ENCODE measurements at regions of chr19 and their contacts with region 1.

Region 1: GRCh38 chr19:48872182-48872883 is at the start of gene PPP1R15A:
- DNase-seq: peak; percentile 95
- ATAC-seq: peak; percentile 50
- H3K4me3 ChIP-seq: peak within 1 kb of the TSS; percentile 93 to 97 (median 94)
- H3K27ac ChIP-seq: peak within 1 kb of the TSS; percentile 99
- H3K4me1 ChIP-seq: peaks cover 50% of the 10 kb centered on the region
- H3K27me3 ChIP-seq: no peaks in the 10 kb centered on the region; a peak in 1 of 5 replicates
- CTCF ChIP-seq: 0 out of 2 replicates have a peak, but pooled peaks have one; percentile 3
- EP300 ChIP-seq: no peak; a peak in 1 of 4 replicates
- POLR2A ChIP-seq: peak; percentile 99
- RAD21 ChIP-seq: no peak
- total RNA-seq, gene PPP1R15A: 7.8 and 18.5 TPM in 2 replicates

Region 2: DNA sequence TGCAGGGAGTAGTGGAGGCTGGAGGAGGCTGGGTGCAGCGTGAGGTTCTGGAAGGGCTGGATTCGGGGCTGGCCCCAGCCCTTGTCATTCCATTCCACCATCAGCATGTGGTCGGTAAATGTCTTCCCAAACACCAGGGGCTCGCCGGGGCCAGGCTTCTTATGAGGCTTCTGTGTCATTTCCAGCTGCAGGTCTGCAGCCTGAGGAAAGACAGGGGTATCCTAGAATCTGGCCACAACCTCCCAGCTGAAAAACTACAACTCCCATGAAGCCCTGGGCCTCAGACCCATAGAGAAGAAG is 65.9 kb before region 1 on chr19:
- CTCF ChIA-PET with region 1: no interaction called
- POLR2A ChIA-PET with region 1: interaction called, 17 read pairs
- in situ Hi-C with region 1: no loop called
- intact Hi-C with region 1: no loop called
- DNase-seq: no peak
- ATAC-seq: no peak
- H3K4me3 ChIP-seq: peak overlapping the region in 2 of 3 experiments; percentile 73 to 78; a peak in 3 of 6 replicates
- H3K27ac ChIP-seq: peak overlapping the region; percentile 82
- H3K4me1 ChIP-seq: peaks cover 38% of the 10 kb centered on the region
- H3K27me3 ChIP-seq: no peaks in the 10 kb centered on the region
- CTCF ChIP-seq: 0 out of 2 replicates have a peak, but pooled peaks have one; percentile 2
- EP300 ChIP-seq: no peak
- POLR2A ChIP-seq: no peak
- RAD21 ChIP-seq: no peak

Region 3: GRCh38 chr19:48819366-48819816 is 52.9 kb before region 1 on chr19:
- CTCF ChIA-PET with region 1: no interaction called
- POLR2A ChIA-PET with region 1: no interaction called
- in situ Hi-C with region 1: no loop called
- intact Hi-C with region 1: no loop called
- DNase-seq: no peak
- ATAC-seq: no peak
- H3K4me3 ChIP-seq: no peak overlapping the region
- H3K27ac ChIP-seq: no peak overlapping the region
- H3K4me1 ChIP-seq: peaks cover 48% of the 10 kb centered on the region
- H3K27me3 ChIP-seq: no peaks in the 10 kb centered on the region
- CTCF ChIP-seq: no peak
- EP300 ChIP-seq: no peak
- POLR2A ChIP-seq: no peak
- RAD21 ChIP-seq: no peak

Region 4: DNA sequence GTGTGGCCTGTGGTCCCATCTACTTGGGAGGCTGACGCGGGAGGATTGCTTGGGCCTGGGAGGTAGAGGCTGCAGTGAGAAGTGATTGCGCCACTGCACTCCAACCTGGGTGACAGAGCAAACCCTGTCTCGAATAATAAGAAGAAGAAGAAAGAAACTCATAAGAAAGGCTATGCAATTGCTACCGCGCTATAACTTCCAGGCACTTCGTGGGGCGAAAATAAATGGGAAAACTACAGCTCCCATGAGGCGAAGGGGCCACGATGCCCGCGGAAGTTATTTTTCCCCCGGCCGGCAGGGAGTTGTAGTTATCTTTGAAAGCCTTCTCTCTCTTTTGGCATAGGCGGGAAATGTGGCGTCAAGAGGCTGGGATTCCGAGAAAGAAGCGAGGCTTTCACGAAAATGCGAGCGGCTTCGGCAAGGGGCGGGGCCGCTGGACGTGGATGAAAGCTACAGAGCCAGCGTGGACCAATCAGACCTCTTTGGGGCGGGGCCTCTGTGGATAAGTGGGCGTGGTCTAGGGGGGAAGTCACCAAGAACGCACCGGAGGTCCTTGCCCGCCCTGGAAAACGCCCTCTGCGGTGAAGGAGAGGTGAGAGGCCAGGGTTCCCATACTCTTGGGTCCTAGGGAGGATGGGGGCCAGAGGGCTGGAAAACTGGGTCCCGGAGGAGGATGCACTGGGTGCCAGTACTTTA is 27.6 kb after region 1 on chr19 and contains the start of gene NUCB1:
- CTCF ChIA-PET with region 1: no interaction called
- POLR2A ChIA-PET with region 1: interaction called, 25 read pairs
- in situ Hi-C with region 1: no loop called
- intact Hi-C with region 1: no loop called
- DNase-seq: peak; percentile 97
- ATAC-seq: peak; percentile 91
- H3K4me3 ChIP-seq: peak within 1 kb of the TSS; percentile 73 to 97 (median 96)
- H3K27ac ChIP-seq: peak within 1 kb of the TSS; percentile 77
- H3K4me1 ChIP-seq: peaks cover 44% of the 10 kb centered on the region
- H3K27me3 ChIP-seq: no peaks in the 10 kb centered on the region; a peak in 1 of 5 replicates
- CTCF ChIP-seq: peak; percentile 41
- EP300 ChIP-seq: no peak
- POLR2A ChIP-seq: peak; percentile 23 to 77; a peak in 2 of 4 replicates
- RAD21 ChIP-seq: no peak
- total RNA-seq, gene NUCB1: 34.3 and 82.3 TPM in 2 replicates

Region 5: DNA sequence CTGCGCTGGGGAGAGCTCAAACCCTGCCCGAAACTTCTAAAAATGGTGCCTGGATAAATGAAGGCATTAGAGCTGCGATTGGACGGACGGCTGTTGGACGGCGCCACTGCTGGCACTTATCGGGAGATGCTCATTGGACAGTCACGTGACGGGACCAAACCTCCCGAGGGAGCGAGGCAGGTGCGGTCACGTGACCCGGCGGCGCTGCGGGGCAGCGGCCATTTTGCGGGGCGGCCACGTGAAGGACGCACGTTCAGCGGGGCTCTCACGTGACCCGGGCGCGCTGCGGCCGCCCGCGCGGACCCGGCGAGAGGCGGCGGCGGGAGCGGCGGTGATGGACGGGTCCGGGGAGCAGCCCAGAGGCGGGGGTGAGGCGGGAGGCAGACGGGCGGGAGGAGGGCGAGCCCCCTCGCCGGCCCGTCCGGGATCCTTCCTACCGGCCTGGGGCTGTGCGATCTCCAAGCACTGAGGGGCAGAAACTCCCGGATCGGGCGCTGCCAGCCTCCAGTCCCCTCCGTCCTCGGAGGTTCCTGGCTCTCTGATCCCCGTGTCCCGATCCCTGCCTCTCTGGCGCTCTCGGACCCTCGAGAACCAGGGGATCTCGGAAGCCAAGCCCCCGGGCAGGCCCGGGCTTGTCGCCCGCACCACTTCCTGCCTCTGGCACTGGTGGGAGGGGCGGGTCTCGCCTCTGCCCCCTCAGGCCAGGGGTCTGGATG is 82.4 kb after region 1 on chr19 and contains the start of gene BAX:
- CTCF ChIA-PET with region 1: no interaction called
- POLR2A ChIA-PET with region 1: interaction called, 17 read pairs
- in situ Hi-C with region 1: no loop called
- intact Hi-C with region 1: no loop called
- DNase-seq: peak; percentile 96
- ATAC-seq: peak; percentile 81
- H3K4me3 ChIP-seq: peak within 1 kb of the TSS; percentile 76 to 84 (median 81)
- H3K27ac ChIP-seq: peak within 1 kb of the TSS; percentile 82
- H3K4me1 ChIP-seq: peaks cover 85% of the 10 kb centered on the region
- H3K27me3 ChIP-seq: no peaks in the 10 kb centered on the region
- CTCF ChIP-seq: peak; percentile 47
- EP300 ChIP-seq: peak in 1 of 2 experiments; percentile 25; a peak in 1 of 4 replicates
- POLR2A ChIP-seq: peak in 1 of 2 experiments; percentile 69; a peak in 3 of 4 replicates
- RAD21 ChIP-seq: peak; percentile 71
- total RNA-seq, gene BAX: 167 and 176 TPM in 2 replicates

Measured in HepG2 (cell line).